OCI-LY7 (cell line): ENCODE measurements at regions of chr3 and their contacts with region 1.

Region 1: GRCh38 chr3:152241142-152242017 is 27.3 kb upstream of the MBNL1 start:
- DNase-seq: no peak
- H3K4me3 ChIP-seq: no peak overlapping the region
- H3K27ac ChIP-seq: peak overlapping the region; percentile 8
- H3K4me1 ChIP-seq: peaks cover 69% of the 10 kb centered on the region
- CTCF ChIP-seq: no peak

Region 2: GRCh38 chr3:152193673-152194267 is 47.6 kb before region 1 on chr3:
- CTCF ChIA-PET with region 1: no interaction called
- POLR2A ChIA-PET with region 1: interaction called, 14 read pairs
- intact Hi-C with region 1: loop called (anchors 1 kb)
- DNase-seq: peak; percentile 32
- H3K4me3 ChIP-seq: peak overlapping the region; percentile 64
- H3K27ac ChIP-seq: no peak overlapping the region
- H3K4me1 ChIP-seq: peaks cover 42% of the 10 kb centered on the region
- CTCF ChIP-seq: no peak

Region 3: GRCh38 chr3:152199102-152199840 is 42.1 kb before region 1 on chr3:
- CTCF ChIA-PET with region 1: no interaction called
- POLR2A ChIA-PET with region 1: interaction called, 16 read pairs
- intact Hi-C with region 1: loop called (anchors 1 kb)
- DNase-seq: peak; percentile 45
- H3K4me3 ChIP-seq: peak overlapping the region; percentile 49
- H3K27ac ChIP-seq: peak overlapping the region; percentile 63
- H3K4me1 ChIP-seq: peaks cover 85% of the 10 kb centered on the region
- CTCF ChIP-seq: no peak

Region 4: DNA sequence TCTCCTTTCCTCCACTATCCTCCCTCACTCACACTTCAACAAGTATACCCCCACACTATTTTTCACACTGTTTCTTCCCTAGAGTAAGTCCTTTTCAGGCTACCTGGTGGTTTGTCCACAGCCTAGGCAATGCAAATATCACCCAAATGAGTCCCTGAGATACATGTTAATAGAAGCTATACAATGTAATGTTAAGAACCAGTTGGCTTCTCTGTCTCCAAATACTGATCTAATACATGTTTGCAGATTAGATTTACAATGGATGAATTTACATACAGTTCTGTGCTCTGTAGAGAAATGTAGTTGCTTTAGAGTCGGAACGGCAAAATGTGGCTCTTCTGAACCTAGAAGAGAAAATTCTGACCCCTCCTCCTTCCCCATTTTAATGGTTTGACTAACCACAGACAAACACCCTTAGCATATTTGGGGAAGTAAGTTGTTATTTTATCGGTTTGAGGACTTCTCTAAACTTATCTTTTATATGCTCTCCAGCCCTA is 36.2 kb before region 1 on chr3:
- CTCF ChIA-PET with region 1: no interaction called
- POLR2A ChIA-PET with region 1: interaction called, 16 read pairs
- intact Hi-C with region 1: no loop called
- DNase-seq: peak; percentile 48
- H3K4me3 ChIP-seq: peak overlapping the region; percentile 60
- H3K27ac ChIP-seq: peak overlapping the region; percentile 23
- H3K4me1 ChIP-seq: peaks cover 53% of the 10 kb centered on the region
- CTCF ChIP-seq: no peak

Region 5: GRCh38 chr3:152258448-152259393 is 17.3 kb after region 1 on chr3:
- CTCF ChIA-PET with region 1: interaction called, 3 read pairs
- POLR2A ChIA-PET with region 1: interaction called, 100 read pairs
- intact Hi-C with region 1: no loop called
- DNase-seq: no peak
- H3K4me3 ChIP-seq: no peak overlapping the region
- H3K27ac ChIP-seq: no peak overlapping the region
- H3K4me1 ChIP-seq: peaks cover 59% of the 10 kb centered on the region
- CTCF ChIP-seq: no peak

Region 6: DNA sequence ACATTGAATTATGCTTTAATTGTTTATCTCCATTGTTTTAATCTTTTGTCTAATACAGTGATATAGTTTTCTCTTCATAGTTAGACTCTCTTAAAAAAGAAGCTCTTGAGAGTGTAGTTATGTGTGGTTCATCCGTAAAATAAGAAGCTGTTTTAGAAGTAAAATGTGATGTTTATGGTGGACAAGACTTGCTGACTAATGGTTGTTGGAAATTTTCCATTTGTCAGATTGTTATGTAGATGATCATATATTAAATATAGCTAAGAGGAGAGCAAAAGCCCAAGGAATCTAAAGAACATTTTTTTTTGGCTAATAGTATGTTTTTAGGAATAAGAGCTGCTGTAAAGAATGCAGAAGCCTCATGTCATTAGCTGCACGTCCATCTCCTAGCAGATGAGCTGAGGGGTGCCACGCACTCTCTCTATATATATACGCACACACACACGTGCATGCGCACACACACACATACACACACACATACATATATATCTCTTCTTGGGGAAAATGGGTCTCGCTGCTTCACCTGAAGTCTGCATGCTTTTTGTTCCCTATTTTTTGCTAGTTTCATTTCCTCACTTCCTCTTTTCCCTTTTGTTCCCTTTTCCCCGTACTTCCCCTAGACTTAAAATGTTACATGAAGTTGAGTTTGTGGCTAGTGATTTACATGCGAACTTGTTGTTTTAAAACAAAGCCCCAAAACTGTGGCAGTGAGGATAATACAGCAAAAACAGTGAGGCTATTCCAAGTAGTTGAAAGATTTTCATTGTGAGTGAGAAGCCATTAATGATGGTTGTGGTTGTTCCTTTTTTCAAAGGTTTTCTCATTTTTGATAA is 135.2 kb after region 1 on chr3:
- CTCF ChIA-PET with region 1: no interaction called
- POLR2A ChIA-PET with region 1: interaction called, 12 read pairs
- intact Hi-C with region 1: no loop called
- DNase-seq: peak; percentile 95
- H3K4me3 ChIP-seq: peak overlapping the region; percentile 55
- H3K27ac ChIP-seq: peak overlapping the region; percentile 92
- H3K4me1 ChIP-seq: peaks cover 77% of the 10 kb centered on the region
- CTCF ChIP-seq: no peak